PC-9 (cell line): ENCODE measurements at regions of chr2 and their contacts with region 1.

Region 1: GRCh38 chr2:28729698-28730097 is 21.9 kb upstream of the PPP1CB start:
- DNase-seq: peak in 1 of 2 experiments; percentile 64
- H3K4me3 ChIP-seq: no peak overlapping the region
- H3K27ac ChIP-seq: no peak overlapping the region
- H3K4me1 ChIP-seq: peaks cover 8% of the 10 kb centered on the region
- H3K27me3 ChIP-seq: no peaks in the 10 kb centered on the region
- CTCF ChIP-seq: no peak

Region 2: GRCh38 chr2:28488858-28489575 is 240.7 kb before region 1 on chr2:
- CTCF ChIA-PET with region 1: no interaction called
- POLR2A ChIA-PET with region 1: interaction called, 16 read pairs
- intact Hi-C with region 1: no loop called
- DNase-seq: no peak
- H3K4me3 ChIP-seq: no peak overlapping the region
- H3K27ac ChIP-seq: no peak overlapping the region
- H3K4me1 ChIP-seq: peaks cover 7% of the 10 kb centered on the region; the same call in 1 of the 2 replicates
- H3K27me3 ChIP-seq: no peaks in the 10 kb centered on the region
- CTCF ChIP-seq: no peak

Region 3: GRCh38 chr2:28821295-28821958 is 91.7 kb after region 1 on chr2:
- CTCF ChIA-PET with region 1: no interaction called
- POLR2A ChIA-PET with region 1: no interaction called
- intact Hi-C with region 1: no loop called
- DNase-seq: peak; percentile 45 to 50
- H3K4me3 ChIP-seq: no peak overlapping the region
- H3K27ac ChIP-seq: 0 out of 2 replicates have a peak overlapping the region, but pooled peaks have one; percentile 1
- H3K4me1 ChIP-seq: no peaks in the 10 kb centered on the region
- H3K27me3 ChIP-seq: no peaks in the 10 kb centered on the region
- CTCF ChIP-seq: peak; percentile 81